ENCODE measurements at regions of chr12 and their contacts with region 1.

Region 1: GRCh38 chr12:133181238-133181959 is at the start of gene ZNF268:
- H3K4me3 Mint-ChIP-seq: peak within 1 kb of the TSS; percentile 91
- H3K27ac Mint-ChIP-seq: peak within 1 kb of the TSS; percentile 86
- H3K4me1 Mint-ChIP-seq: peaks cover 10% of the 10 kb centered on the region
- H3K27me3 Mint-ChIP-seq: no peaks in the 10 kb centered on the region

Region 2: DNA sequence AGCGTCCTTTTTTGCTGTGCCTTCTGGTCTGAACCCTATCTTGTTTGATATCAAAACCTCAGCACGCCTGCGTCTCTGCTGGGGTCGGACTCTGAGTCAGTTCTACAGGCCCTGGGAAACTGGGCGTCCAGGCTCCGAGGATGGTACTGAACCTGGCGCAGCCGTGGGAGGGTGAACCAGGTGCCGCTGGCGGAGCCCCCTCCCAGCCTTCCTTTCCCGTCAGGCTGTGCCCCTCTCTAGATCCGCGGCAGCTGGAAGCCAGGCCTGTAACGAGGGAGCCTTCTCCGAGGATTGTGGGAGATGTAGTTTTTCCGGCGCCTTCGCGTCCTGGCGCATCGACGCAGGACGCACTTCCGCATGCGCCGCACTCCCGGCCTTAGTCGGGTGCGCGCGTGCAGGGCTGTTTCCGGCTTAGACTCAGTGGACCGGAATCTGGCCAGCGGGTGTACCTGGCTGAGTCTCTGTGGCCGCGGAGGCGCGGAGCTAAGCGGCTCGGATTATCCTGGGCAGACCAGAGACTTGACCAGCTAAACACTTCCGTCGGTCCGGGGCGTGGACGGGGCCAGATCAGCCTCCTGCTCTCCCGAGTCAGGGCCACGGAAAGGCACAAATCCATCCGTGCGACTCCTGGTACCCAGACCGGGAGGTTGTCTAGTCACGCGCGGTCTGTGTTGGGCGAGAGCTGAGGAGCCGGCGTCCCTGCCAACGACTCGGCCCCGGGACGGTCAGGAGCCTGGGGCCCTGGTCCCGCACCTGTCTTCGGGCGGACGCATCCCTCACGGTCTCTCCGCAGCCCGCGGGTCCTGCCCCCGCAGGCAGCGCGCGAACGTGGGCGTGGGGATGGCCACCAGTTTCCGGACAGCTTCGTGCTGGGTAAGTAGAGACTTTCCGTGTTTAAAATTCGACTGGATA is 195.1 kb before region 1 on chr12 and contains the start of gene ZNF26:
- intact Hi-C with region 1: loop called (anchors 1 kb)
- H3K4me3 Mint-ChIP-seq: peak within 1 kb of the TSS; percentile 89
- H3K27ac Mint-ChIP-seq: peak within 1 kb of the TSS; percentile 95
- H3K4me1 Mint-ChIP-seq: peaks cover 16% of the 10 kb centered on the region
- H3K27me3 Mint-ChIP-seq: no peaks in the 10 kb centered on the region

Region 3: GRCh38 chr12:133058203-133059125 is 122.9 kb before region 1 on chr12:
- intact Hi-C with region 1: no loop called
- H3K4me3 Mint-ChIP-seq: no peak overlapping the region
- H3K27ac Mint-ChIP-seq: no peak overlapping the region
- H3K4me1 Mint-ChIP-seq: no peaks in the 10 kb centered on the region
- H3K27me3 Mint-ChIP-seq: no peaks in the 10 kb centered on the region

Region 4: DNA sequence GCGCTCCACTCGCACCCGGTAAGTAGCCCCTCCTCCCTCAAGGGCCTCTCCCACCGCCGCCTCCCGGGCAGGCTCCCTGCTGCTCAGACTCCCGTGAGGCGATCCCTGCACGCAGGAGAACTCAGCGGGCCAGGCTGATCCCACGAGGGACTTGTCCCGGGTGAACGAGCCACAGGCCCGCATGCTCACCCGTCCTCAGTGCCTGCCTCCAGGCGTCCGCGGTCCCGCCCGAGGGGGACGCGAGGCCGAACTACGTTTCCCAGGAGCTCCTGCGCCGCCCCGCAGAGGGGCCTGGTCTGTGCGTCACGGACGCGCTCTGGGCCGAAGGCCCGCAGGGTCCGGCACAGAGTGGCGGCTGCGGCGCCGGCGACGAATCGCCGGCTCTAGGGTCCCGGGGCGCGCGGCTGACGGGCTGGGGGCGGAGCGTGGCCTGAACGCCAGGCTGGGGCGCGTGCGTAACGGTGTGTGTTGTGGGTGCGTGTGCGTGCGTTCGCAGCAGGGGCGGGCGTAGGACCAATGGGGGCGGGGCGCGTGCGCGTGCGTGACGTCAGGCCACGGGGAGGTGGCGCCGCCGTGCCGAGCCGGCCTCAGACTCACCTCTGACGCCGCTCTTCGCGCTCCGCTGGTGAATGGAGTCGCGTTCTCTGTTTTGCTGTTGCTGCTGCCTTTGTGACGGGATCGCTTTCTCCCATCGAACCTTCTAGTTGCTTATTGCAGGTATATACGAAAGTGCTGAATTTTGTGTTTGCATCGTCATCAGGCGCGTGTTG is 51.2 kb before region 1 on chr12 and contains the starts of genes ZNF10 and ZNF891:
- intact Hi-C with region 1: loop called (anchors 1 kb)
- H3K4me3 Mint-ChIP-seq: peak within 1 kb of the TSS; percentile 92
- H3K27ac Mint-ChIP-seq: peak within 1 kb of the TSS; percentile 93
- H3K4me1 Mint-ChIP-seq: peaks cover 17% of the 10 kb centered on the region
- H3K27me3 Mint-ChIP-seq: peaks cover 2% of the 10 kb centered on the region

Region 5: DNA sequence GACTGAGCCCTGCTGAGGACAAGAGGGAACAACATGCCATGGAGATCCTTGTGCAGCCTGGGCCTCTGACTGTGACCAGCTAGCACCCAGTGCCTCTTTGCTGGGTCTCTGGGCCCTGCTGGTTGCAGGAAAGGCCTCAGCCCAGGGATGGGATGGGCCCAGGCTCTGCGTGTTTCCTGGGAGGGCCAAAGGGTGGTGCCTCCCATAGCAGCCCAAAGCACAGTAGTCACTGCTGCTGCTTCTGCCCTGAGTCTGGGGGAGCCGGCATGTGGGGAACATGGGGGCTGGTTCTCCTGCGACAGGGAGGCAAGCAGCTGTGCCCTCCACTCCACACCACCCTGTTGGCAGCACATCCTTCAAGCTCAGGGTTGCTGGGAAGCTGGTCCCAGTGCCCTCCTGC is 35.8 kb after region 1 on chr12:
- intact Hi-C with region 1: no loop called
- H3K4me3 Mint-ChIP-seq: no peak overlapping the region
- H3K27ac Mint-ChIP-seq: no peak overlapping the region
- H3K4me1 Mint-ChIP-seq: no peaks in the 10 kb centered on the region
- H3K27me3 Mint-ChIP-seq: no peaks in the 10 kb centered on the region